ENCODE measurements at regions of chr7 and their contacts with region 1.

Region 1: GRCh38 chr7:44858161-44858560 is 10.3 kb upstream of the H2AZ2 start:
- DNase-seq: no peak
- ATAC-seq: no peak
- H3K4me3 ChIP-seq: no peak overlapping the region
- H3K27ac ChIP-seq: no peak overlapping the region
- H3K4me1 ChIP-seq: peaks cover 0 to 6% (median 0%) of the 10 kb centered on the region in 12 donors
- H3K27me3 ChIP-seq: no peaks in the 10 kb centered on the region
- CTCF ChIP-seq: peak in 2 of 12 donors; percentile 24 to 40
- POLR2A ChIP-seq: no peak

Region 2: DNA sequence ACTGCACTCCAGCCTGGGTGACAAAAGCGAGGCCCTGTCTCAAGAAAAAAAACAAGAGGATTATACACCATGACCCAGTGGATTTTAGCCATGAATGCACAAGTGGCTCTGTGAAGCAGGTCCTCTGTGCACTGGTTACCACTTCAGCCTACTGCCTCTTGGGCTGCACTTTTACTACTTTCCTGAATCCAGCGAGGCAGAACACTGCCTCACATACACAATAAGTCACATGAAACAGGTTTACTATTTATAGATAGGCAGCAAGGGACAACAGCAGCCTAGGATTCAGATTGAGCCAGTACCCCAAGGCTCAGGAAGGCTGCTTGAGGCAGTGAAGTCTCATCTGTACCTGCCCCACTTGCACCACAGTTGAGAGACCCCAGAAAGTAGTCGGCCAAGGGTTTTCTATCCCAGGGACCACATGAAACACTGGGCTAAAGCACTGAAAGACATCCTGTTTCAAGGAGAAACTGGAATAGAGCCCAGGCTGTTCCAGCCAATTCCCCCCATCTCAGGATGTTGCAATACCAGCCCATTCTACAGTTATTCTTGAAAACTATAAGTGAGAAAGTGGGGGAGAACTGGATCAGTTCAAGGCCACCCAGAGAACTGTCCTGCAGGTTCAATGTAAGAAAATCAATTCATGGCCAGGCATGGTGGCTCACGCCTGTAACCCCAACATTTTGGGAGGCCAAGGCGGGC is 262.1 kb before region 1 on chr7:
- intact Hi-C with region 1: loop called in 1 of 10 experiments (anchors 5 kb)
- DNase-seq: no peak
- ATAC-seq: peak; percentile 88 to 96 (median 94)
- H3K4me3 ChIP-seq: no peak overlapping the region
- H3K27ac ChIP-seq: peak overlapping the region in 10 of 12 donors; percentile 25 to 86 (median 71)
- H3K4me1 ChIP-seq: peaks cover 0 to 16% (median 3%) of the 10 kb centered on the region in 12 donors
- H3K27me3 ChIP-seq: no peaks in the 10 kb centered on the region
- CTCF ChIP-seq: peak in 3 of 12 donors; percentile 8 to 17 (median 15)
- POLR2A ChIP-seq: peak in 1 of 2 donors; percentile 13

Region 3: GRCh38 chr7:44921607-44922359 is 63.6 kb after region 1 on chr7:
- intact Hi-C with region 1: loop called (anchors 1 to 5 kb)
- DNase-seq: peak; percentile 84 to 95 (median 88)
- ATAC-seq: peak; percentile 67 to 98 (median 95)
- H3K4me3 ChIP-seq: no peak overlapping the region
- H3K27ac ChIP-seq: no peak overlapping the region
- H3K4me1 ChIP-seq: peaks cover 0 to 5% (median 0%) of the 10 kb centered on the region in 12 donors
- H3K27me3 ChIP-seq: peaks cover 0 to under 1% (median 0%) of the 10 kb centered on the region in 9 donors
- CTCF ChIP-seq: peak; percentile 79 to 96 (median 88)
- POLR2A ChIP-seq: no peak